CD4-positive, alpha-beta T cell (primary cell): ENCODE measurements at regions of chr5 and their contacts with region 1.

Region 1: DNA sequence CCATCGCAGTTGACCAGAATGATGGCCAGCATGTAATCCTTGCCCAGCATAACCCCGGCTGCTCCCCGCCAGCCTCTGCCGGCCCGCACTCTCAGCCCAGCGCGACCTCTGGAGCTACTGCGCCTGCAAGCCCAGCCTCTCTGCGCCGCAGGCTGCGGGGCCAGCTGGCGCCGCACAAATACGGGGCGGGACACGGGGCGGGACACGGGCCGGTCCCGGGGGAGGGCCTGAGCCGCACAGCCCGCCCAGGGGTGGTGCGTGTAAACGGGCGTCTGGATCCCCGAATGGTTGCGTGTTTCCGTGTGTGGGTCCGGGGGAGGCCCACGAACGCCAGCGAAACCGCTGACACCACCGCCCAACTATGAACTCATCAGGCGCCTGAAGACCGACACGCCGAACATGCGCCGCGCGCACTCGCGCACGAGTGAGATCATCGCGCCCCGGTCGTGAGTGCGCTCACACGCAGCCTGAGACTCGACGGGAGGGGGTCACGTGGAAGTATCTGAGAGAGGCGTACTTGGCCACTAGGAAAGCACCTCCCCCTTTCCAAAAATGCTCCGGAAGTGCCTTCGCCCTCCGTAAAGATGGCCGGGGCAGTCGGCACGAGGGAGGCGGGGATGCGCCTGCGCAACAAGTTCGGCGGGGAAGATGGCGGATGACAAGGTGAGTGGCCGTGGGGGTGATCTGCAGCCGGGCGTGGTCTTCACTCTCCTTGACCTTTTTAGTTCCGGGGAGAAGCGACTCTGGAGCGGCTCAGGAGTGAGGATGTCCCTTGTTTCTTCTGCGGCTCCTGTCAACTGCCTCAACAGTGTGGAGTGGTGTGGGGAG is at the starts of genes APBB3 and SLC35A4:
- DNase-seq: peak; percentile 92 to 100 (median 96)
- ATAC-seq: peak; percentile 87
- H3K4me3 ChIP-seq: peak within 1 kb of the TSS; percentile 98
- H3K4me3 Mint-ChIP-seq: peak within 1 kb of the TSS; percentile 94
- H3K27ac ChIP-seq: peak within 1 kb of the TSS; percentile 89 to 97
- H3K27ac Mint-ChIP-seq: peak within 1 kb of the TSS; percentile 94
- H3K4me1 ChIP-seq: peaks cover 70% of the 10 kb centered on the region
- H3K4me1 Mint-ChIP-seq: peaks cover 59% of the 10 kb centered on the region
- H3K27me3 ChIP-seq: no peaks in the 10 kb centered on the region
- H3K27me3 Mint-ChIP-seq: no peaks in the 10 kb centered on the region
- CTCF ChIP-seq: no peak
- total RNA-seq, gene APBB3: 56.6 to 61.5 TPM
- total RNA-seq, gene SLC35A4: 16.9 to 17.8 TPM

Region 2: DNA sequence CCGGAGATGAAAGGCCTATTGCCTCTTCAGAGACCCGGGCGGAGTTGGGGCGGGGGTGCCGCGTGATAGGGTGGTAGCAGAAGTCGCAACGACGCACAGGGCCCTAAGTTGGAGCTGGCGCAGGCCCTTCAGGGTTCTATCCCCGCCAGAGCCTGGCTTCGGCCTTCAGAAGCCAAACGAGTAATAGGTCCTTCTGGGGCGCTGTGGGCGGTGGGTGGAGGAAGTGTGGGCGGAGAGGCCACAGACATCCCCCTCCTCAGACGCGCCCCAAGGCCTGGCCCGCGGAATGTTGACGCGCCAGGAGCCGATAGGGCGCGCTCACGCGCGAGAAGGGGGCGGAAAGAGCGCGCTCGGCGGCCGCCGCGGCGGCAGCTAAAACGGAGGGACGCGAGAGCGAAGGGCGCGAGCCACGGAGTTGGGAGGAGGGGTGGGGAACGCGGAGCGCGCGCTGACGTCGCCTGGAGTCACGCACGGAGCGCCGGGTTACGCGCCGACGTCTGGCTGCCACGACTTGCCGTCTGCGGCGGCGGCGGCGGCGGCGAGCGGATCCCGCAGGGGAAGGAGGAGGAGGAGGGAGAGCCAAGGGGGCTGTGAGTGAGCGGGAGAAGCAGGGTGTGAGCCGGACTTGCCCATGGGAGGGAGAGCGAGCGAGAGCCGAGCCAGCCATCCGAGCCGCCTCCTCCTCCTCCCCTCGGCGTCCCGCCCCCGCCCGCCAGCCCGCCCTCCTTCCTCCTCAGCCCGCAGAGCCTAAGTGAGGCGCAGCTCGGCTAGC is 456.9 kb before region 1 on chr5:
- CTCF ChIA-PET with region 1: no interaction called
- POLR2A ChIA-PET with region 1: no interaction called
- intact Hi-C with region 1: loop called in 1 of 2 experiments (anchors 5 kb)
- DNase-seq: peak; percentile 89 to 98 (median 93)
- ATAC-seq: peak; percentile 80
- H3K4me3 ChIP-seq: peak overlapping the region; percentile 76
- H3K4me3 Mint-ChIP-seq: peak overlapping the region; percentile 96
- H3K27ac ChIP-seq: peak overlapping the region; percentile 92 to 96
- H3K27ac Mint-ChIP-seq: peak overlapping the region; percentile 100
- H3K4me1 ChIP-seq: peaks cover 34% of the 10 kb centered on the region
- H3K4me1 Mint-ChIP-seq: peaks cover 59% of the 10 kb centered on the region
- H3K27me3 ChIP-seq: peaks cover 10 to 11% of the 10 kb centered on the region in 2 experiments
- H3K27me3 Mint-ChIP-seq: peaks cover 11% of the 10 kb centered on the region
- CTCF ChIP-seq: peak; percentile 23

Region 3: GRCh38 chr5:140302786-140303639 is 261.4 kb before region 1 on chr5 and contains the start of gene PFDN1:
- CTCF ChIA-PET with region 1: no interaction called
- POLR2A ChIA-PET with region 1: no interaction called
- intact Hi-C with region 1: loop called in 1 of 2 experiments (anchors 5 kb)
- DNase-seq: peak; percentile 79 to 97 (median 88)
- ATAC-seq: peak; percentile 99
- H3K4me3 ChIP-seq: peak within 1 kb of the TSS; percentile 73
- H3K4me3 Mint-ChIP-seq: peak within 1 kb of the TSS; percentile 97
- H3K27ac ChIP-seq: peak within 1 kb of the TSS; percentile 38 to 42
- H3K27ac Mint-ChIP-seq: peak within 1 kb of the TSS; percentile 92
- H3K4me1 ChIP-seq: peaks cover 14% of the 10 kb centered on the region
- H3K4me1 Mint-ChIP-seq: peaks cover 30% of the 10 kb centered on the region
- H3K27me3 ChIP-seq: no peaks in the 10 kb centered on the region
- H3K27me3 Mint-ChIP-seq: no peaks in the 10 kb centered on the region
- CTCF ChIP-seq: no peak
- total RNA-seq, gene PFDN1: 21.3 to 22.0 TPM

Region 4: GRCh38 chr5:140639148-140639979 is 75.0 kb after region 1 on chr5 and contains the start of gene TMCO6:
- CTCF ChIA-PET with region 1: interaction called, 6 read pairs
- POLR2A ChIA-PET with region 1: interaction called, 7 read pairs
- intact Hi-C with region 1: loop called (anchors 1 to 2 kb)
- DNase-seq: peak; percentile 94 to 99 (median 96)
- ATAC-seq: peak; percentile 98
- H3K4me3 ChIP-seq: peak within 1 kb of the TSS; percentile 73
- H3K4me3 Mint-ChIP-seq: peak within 1 kb of the TSS; percentile 92
- H3K27ac ChIP-seq: peak within 1 kb of the TSS; percentile 77 to 94
- H3K27ac Mint-ChIP-seq: peak within 1 kb of the TSS; percentile 93
- H3K4me1 ChIP-seq: peaks cover 28% of the 10 kb centered on the region
- H3K4me1 Mint-ChIP-seq: peaks cover 34% of the 10 kb centered on the region
- H3K27me3 ChIP-seq: no peaks in the 10 kb centered on the region
- H3K27me3 Mint-ChIP-seq: no peaks in the 10 kb centered on the region
- CTCF ChIP-seq: peak; percentile 76
- total RNA-seq, gene TMCO6: 20.9 to 21.1 TPM

Region 5: GRCh38 chr5:140664359-140665119 is 100.1 kb after region 1 on chr5 and contains the start of gene WDR55:
- CTCF ChIA-PET with region 1: no interaction called
- POLR2A ChIA-PET with region 1: no interaction called
- intact Hi-C with region 1: loop called in 1 of 2 experiments (anchors 1 kb)
- DNase-seq: peak; percentile 90 to 98 (median 95)
- ATAC-seq: peak; percentile 92
- H3K4me3 ChIP-seq: peak within 1 kb of the TSS; percentile 98
- H3K4me3 Mint-ChIP-seq: peak within 1 kb of the TSS; percentile 91
- H3K27ac ChIP-seq: peak within 1 kb of the TSS; percentile 87 to 93
- H3K27ac Mint-ChIP-seq: peak within 1 kb of the TSS; percentile 98
- H3K4me1 ChIP-seq: peaks cover 26% of the 10 kb centered on the region
- H3K4me1 Mint-ChIP-seq: peaks cover 45% of the 10 kb centered on the region
- H3K27me3 ChIP-seq: no peaks in the 10 kb centered on the region
- H3K27me3 Mint-ChIP-seq: no peaks in the 10 kb centered on the region
- CTCF ChIP-seq: no peak
- total RNA-seq, gene WDR55: 40.1 to 42.9 TPM

Region 6: DNA sequence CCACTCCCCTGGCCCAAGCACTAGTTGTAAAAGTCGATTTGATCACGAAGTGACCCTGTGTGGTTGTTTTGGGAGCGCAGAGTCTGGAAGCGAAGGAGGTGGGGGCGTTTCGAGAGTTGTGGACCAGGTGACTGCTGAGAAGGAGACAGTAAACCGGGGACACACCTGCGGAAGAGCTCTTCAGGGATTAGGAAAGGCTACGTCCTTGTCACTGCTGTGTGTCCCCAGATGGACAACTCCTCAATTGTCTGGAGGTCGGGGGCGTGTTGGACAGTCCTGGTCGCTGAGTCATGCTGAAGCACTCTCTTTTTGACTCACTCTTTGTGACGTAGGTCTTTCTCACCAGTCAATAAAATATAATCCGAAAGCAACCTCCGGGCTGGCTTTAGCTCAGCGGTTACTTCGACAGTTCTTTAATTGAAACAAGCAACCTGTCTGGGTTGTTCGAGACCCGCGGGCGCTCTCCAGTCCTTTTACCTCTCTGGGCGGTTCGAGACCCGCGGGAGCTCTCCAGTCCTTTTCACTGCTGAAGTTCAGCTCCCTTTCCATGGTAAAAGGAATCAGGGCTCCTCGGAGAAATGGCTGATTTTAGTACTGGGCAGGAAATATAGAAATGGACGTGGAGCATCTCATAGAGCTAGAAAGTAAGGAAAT is 146.6 kb after region 1 on chr5:
- CTCF ChIA-PET with region 1: no interaction called
- POLR2A ChIA-PET with region 1: interaction called, 7 read pairs
- intact Hi-C with region 1: loop called (anchors 5 kb)
- DNase-seq: peak; percentile 70 to 97 (median 82)
- ATAC-seq: peak; percentile 77
- H3K4me3 ChIP-seq: peak overlapping the region; percentile 70
- H3K4me3 Mint-ChIP-seq: peak overlapping the region; percentile 99
- H3K27ac ChIP-seq: peak overlapping the region; percentile 87 to 88
- H3K27ac Mint-ChIP-seq: peak overlapping the region; percentile 98
- H3K4me1 ChIP-seq: peaks cover 9% of the 10 kb centered on the region
- H3K4me1 Mint-ChIP-seq: peaks cover 27% of the 10 kb centered on the region
- H3K27me3 ChIP-seq: no peaks in the 10 kb centered on the region
- H3K27me3 Mint-ChIP-seq: peaks cover 8% of the 10 kb centered on the region
- CTCF ChIP-seq: no peak